ENCODE measurements at regions of chr19 and their contacts with region 1.

Region 1: DNA sequence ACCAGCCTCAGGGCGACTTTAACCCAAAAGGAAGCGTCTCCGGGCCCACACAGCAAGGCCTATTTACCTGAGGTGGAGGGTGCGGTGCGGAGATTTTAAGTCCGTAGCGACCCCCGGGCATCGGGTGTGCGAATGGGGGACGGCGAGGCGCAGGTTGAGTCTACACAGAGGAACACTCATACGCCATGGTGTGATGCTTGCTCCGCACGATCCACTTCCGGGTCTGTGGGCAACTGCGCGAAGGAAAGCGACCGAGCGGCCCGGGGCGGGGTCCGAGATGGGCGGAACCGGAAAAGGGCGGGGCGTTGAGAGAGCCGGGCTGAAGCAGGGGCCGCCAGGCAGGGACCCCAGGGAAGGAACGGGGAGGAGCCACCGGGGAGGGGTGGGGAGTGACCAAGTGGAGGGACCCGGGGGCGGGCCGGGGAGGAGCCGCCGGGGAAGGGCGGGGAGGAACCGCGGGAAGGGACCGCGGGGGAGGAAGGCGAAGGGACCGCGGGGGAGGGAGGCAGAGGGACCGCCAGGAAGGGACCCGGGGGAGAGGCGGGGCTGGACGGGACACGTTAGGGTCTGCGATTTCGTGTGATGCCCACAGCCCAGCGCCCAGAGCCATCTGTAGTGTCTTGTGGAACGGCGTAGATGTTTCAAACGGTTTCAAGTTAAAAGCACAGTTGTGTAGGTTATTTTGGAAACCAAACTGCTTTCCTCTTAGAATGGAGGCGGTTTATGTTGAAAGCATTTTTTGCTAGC is at the start of gene ZNF160:
- DNase-seq: peak; percentile 98 to 100
- H3K4me3 ChIP-seq: peak within 1 kb of the TSS; percentile 67 to 99
- H3K27ac ChIP-seq: peak within 1 kb of the TSS; percentile 84 to 100
- H3K4me1 ChIP-seq: peaks cover 0 to 27% (median 16%) of the 10 kb centered on the region in 4 donors
- H3K27me3 ChIP-seq: no peaks in the 10 kb centered on the region
- CTCF ChIP-seq: no peak

Region 2: DNA sequence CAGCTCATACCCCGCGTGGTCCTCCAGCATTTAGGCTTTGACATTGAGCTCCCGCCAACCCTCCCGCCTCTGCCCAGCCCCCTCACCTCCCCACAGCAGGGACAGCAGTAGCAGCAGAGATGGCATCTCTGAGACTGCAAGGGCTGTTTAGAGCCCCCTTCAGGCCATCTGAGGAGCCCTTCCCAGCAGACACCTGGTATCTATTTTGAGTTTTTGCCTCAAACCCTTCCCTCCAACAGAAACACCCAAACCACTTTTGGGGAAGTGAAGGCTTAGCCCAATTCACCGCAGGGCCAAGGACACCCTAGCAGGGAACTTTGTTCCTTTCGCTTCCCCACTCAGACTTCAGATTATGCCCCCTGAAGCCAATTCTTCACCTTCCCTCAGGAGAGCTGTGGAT is 1538.6 kb before region 1 on chr19:
- intact Hi-C with region 1: no loop called
- DNase-seq: no peak
- H3K4me3 ChIP-seq: no peak overlapping the region
- H3K27ac ChIP-seq: no peak overlapping the region
- H3K4me1 ChIP-seq: no peaks in the 10 kb centered on the region
- H3K27me3 ChIP-seq: peaks cover 0 to 18% of the 10 kb centered on the region in 2 donors
- CTCF ChIP-seq: no peak

Region 3: GRCh38 chr19:52942386-52943133 is 160.8 kb before region 1 on chr19:
- intact Hi-C with region 1: loop called (anchors 10 kb)
- DNase-seq: peak; percentile 89 to 97
- H3K4me3 ChIP-seq: peak overlapping the region; percentile 73 to 90
- H3K27ac ChIP-seq: peak overlapping the region; percentile 87 to 96
- H3K4me1 ChIP-seq: peaks cover 0 to 20% (median 9%) of the 10 kb centered on the region in 4 donors
- H3K27me3 ChIP-seq: no peaks in the 10 kb centered on the region
- CTCF ChIP-seq: no peak

Region 4: DNA sequence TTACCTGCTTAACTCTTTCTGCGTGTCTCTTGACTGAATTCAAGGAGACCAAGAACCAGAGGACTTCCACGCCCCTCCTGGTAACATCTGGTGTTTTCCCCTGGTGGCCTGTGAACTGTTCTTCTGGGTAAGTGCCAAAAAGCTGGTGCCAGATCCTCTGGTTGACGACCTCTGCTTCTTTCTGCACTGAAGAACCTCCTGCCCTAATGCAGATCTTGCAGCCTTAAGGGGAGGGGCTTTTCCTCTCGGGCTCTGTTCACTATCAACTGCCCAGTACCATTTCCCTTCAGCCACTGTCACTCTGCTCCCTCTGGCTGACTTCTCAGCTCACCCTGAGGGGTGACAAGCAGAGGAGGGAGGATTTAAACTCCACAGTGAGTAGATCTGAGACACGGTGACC is 95.8 kb before region 1 on chr19:
- intact Hi-C with region 1: no loop called
- DNase-seq: no peak
- H3K4me3 ChIP-seq: no peak overlapping the region
- H3K27ac ChIP-seq: no peak overlapping the region
- H3K4me1 ChIP-seq: no peaks in the 10 kb centered on the region
- H3K27me3 ChIP-seq: peaks cover 0 to 7% of the 10 kb centered on the region in 2 donors
- CTCF ChIP-seq: no peak

Region 5: DNA sequence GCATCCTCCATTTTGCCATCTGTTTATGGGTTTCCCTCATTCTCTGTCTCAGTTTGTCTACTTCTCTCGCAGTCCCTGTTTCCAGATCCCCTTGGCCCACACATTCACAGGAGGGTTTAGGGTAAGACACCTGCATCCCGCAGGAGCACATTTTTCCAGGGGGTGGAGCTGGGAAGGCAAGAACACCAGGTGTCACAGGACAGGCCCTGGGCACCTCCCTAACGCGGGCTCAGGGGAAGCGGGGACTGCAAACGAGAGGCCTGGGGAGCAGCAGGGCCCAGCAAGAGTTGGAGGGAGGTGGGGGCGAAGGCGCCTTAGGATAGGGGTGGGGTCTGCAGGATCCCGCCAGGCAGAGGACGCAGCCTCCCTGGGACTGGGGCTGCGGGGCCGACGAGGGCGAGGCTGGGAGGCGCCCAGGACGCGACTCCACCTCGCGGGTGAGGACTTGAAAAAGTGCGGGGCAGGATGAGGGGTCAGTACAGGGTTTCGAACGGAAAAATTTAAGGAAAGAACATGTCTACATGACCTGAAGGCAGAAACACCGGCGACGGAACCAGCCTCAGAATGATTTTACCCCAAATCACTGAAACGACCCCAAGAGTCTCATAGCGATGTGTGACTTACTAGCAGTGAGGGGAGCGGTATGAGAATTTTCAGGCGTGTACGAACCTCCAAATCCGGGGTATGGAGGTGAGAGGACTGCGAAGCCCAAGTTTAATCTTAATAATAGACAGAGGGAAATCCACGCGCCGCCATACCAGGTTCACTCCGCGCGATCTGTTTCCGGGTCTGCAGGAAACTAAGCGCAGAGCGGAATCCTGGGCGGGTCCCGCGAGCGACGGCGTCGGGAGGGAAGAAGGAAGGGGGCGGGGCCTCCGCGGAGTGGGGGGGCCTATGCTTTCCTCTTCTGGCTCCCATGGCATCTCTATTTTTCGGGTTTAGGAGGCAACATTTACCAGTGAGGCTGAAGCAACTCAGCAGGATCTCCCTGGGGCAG is 66.0 kb before region 1 on chr19:
- intact Hi-C with region 1: no loop called
- DNase-seq: no peak
- H3K4me3 ChIP-seq: no peak overlapping the region
- H3K27ac ChIP-seq: no peak overlapping the region
- H3K4me1 ChIP-seq: no peaks in the 10 kb centered on the region
- H3K27me3 ChIP-seq: peaks cover 0 to 26% of the 10 kb centered on the region in 2 donors
- CTCF ChIP-seq: no peak

Region 6: GRCh38 chr19:53132141-53132991 is 29.0 kb after region 1 on chr19 and contains the start of gene ZNF415:
- intact Hi-C with region 1: loop called (anchors 2 kb)
- DNase-seq: peak; percentile 66 to 89
- H3K4me3 ChIP-seq: peak within 1 kb of the TSS; percentile 61 to 66
- H3K27ac ChIP-seq: peak within 1 kb of the TSS; percentile 58 to 76
- H3K4me1 ChIP-seq: peaks cover 0 to 14% (median 12%) of the 10 kb centered on the region in 4 donors
- H3K27me3 ChIP-seq: no peaks in the 10 kb centered on the region
- CTCF ChIP-seq: no peak

Region 7: DNA sequence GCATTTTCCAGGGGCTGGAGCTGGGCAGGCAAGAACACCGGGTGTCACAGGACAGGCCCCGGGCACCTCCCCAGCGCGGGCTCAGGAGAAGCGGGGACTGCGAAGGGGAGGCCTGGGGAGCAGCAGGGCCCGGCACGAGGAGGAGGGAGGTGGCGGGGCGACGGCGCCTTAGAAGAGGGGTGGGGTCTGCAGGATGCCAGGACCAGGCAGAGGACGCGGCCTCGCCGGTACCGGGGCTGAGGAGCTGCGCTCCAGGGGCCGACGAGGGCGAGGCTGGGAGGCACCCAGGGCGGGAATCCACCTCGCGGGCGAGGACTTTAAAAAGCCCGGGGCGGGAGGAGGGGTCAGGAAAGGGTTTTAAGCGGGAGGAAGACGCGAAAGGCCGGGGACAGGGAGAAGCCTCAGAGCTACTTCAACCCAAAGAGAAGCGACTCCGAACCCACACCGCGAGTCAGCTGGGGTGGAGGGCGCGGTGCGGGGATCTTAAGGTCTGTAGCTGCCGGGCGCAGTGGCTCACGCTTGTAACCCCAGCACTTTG is 54.8 kb after region 1 on chr19:
- intact Hi-C with region 1: loop called (anchors 10 kb)
- DNase-seq: peak; percentile 27 to 65
- H3K4me3 ChIP-seq: peak overlapping the region; percentile 69 to 81
- H3K27ac ChIP-seq: peak overlapping the region; percentile 73 to 80
- H3K4me1 ChIP-seq: peaks cover 0 to 17% (median 16%) of the 10 kb centered on the region in 4 donors
- H3K27me3 ChIP-seq: no peaks in the 10 kb centered on the region
- CTCF ChIP-seq: no peak

Region 8: GRCh38 chr19:53333463-53334449 is 230.4 kb after region 1 on chr19 and contains the start of gene ZNF845:
- intact Hi-C with region 1: no loop called
- DNase-seq: peak; percentile 93 to 96
- H3K4me3 ChIP-seq: peak within 1 kb of the TSS; percentile 64 to 67
- H3K27ac ChIP-seq: peak within 1 kb of the TSS; percentile 78 to 86
- H3K4me1 ChIP-seq: peaks cover 0 to 13% (median 8%) of the 10 kb centered on the region in 4 donors
- H3K27me3 ChIP-seq: no peaks in the 10 kb centered on the region
- CTCF ChIP-seq: no peak